Heart right ventricle (tissue), 16 donors: ENCODE measurements at regions of chr13 and their contacts with region 1.

Region 1: GRCh38 chr13:98842864-98843481 is 90.5 kb upstream of the SLC15A1 start:
- DNase-seq: peak; percentile 72 to 74
- ATAC-seq: peak; percentile 65 to 90 (median 84)
- H3K4me3 ChIP-seq: no peak overlapping the region
- H3K27ac ChIP-seq: peak overlapping the region in 1 of 10 donors; percentile 48
- H3K4me1 ChIP-seq: peaks cover 0 to 23% (median 8%) of the 10 kb centered on the region in 9 donors
- H3K27me3 ChIP-seq: no peaks in the 10 kb centered on the region
- CTCF ChIP-seq: peak; percentile 71 to 90 (median 89)

Region 2: DNA sequence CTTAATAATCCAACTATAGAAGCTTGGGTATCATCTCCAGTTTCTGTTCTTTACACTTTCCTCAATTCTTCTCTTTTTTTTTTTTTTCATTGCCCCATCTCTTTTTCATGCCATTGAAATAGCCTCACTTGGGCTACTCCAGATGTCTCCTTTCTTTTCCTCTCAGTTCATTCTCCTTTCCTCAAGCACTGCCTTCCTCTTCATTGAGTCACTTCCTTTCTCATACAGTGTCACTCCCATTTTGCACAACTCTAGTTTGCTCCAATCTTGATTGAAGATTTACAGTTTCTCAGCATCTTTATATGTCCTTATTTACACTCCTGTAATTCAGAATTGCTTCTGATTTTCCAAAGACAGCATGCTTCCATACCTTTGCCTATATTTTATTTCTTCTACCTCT is 828.2 kb before region 1 on chr13:
- intact Hi-C with region 1: loop called in 1 of 10 experiments (anchors 5 kb)
- DNase-seq: no peak
- ATAC-seq: no peak
- H3K4me3 ChIP-seq: no peak overlapping the region
- H3K27ac ChIP-seq: no peak overlapping the region
- H3K4me1 ChIP-seq: peaks cover 0 to 5% (median 0%) of the 10 kb centered on the region in 9 donors
- H3K27me3 ChIP-seq: no peaks in the 10 kb centered on the region
- CTCF ChIP-seq: no peak

Region 3: GRCh38 chr13:98445340-98446233 is 397.4 kb before region 1 on chr13:
- intact Hi-C with region 1: loop called in 4 of 10 experiments (anchors 10 kb)
- DNase-seq: peak; percentile 60 to 75
- ATAC-seq: peak; percentile 73 to 89 (median 81)
- H3K4me3 ChIP-seq: peak overlapping the region in 1 of 10 donors; percentile 4
- H3K27ac ChIP-seq: peak overlapping the region in 3 of 10 donors; percentile 19 to 46 (median 41)
- H3K4me1 ChIP-seq: peaks cover 4 to 35% (median 28%) of the 10 kb centered on the region in 9 donors
- H3K27me3 ChIP-seq: no peaks in the 10 kb centered on the region
- CTCF ChIP-seq: peak; percentile 90 to 99 (median 97)

Region 4: GRCh38 chr13:98454389-98454881 is 388.5 kb before region 1 on chr13:
- intact Hi-C with region 1: loop called in 4 of 10 experiments (anchors 10 kb)
- DNase-seq: no peak
- ATAC-seq: peak in 7 of 8 donors; percentile 45 to 83 (median 68)
- H3K4me3 ChIP-seq: no peak overlapping the region
- H3K27ac ChIP-seq: peak overlapping the region in 9 of 10 donors; percentile 7 to 86 (median 66)
- H3K4me1 ChIP-seq: peaks cover 11 to 71% (median 50%) of the 10 kb centered on the region in 9 donors
- H3K27me3 ChIP-seq: no peaks in the 10 kb centered on the region
- CTCF ChIP-seq: no peak

Region 5: DNA sequence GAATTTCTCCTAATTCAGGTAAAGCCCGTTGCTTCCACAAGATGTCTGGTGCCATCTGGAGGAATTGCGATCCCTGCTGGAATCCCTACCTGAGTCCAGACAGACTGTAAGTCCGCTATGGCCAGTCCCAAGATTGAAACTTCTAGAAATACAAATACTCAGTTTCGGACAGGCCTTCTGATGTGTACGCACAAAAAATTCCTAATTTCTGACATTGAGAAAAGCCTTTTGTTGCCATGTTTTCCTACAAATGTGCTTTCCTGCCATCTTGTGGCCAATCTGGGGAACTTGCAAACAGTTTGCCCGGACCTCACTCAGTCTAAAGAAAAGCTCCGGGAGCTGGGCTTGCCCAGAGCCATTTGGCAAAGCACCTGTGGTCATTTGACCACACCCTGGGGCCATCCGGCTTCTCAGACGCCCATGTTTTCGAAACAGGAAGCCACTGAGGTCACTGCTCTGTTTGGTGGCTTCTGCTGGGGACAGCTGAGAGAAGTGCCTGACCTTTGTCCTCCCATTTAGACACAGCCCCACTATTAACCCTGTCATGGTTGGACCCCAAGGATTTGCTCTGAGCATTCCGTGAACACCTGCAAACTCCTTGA is 169.9 kb before region 1 on chr13:
- intact Hi-C with region 1: loop called in 8 of 10 experiments (anchors 2 to 10 kb)
- DNase-seq: peak; percentile 45 to 72
- ATAC-seq: peak; percentile 89 to 96 (median 92)
- H3K4me3 ChIP-seq: peak overlapping the region in 1 of 10 donors; percentile 9
- H3K27ac ChIP-seq: peak overlapping the region in 2 of 10 donors; percentile 20 to 29
- H3K4me1 ChIP-seq: peaks cover 0 to 18% (median 11%) of the 10 kb centered on the region in 9 donors
- H3K27me3 ChIP-seq: no peaks in the 10 kb centered on the region
- CTCF ChIP-seq: peak; percentile 75 to 95 (median 88)